ENCODE measurements at regions of chr10 and their contacts with region 1.

Region 1: GRCh38 chr10:101060036-101060950 is 1.5 kb upstream of the KAZALD1 start:
- DNase-seq: peak; percentile 94
- H3K27ac ChIP-seq: peak overlapping the region; percentile 94
- CTCF ChIP-seq: peak; percentile 91

Region 2: GRCh38 chr10:99659031-99659867 is 1401.0 kb before region 1 on chr10 and contains the start of gene ENTPD7:
- CTCF ChIA-PET with region 1: no interaction called
- POLR2A ChIA-PET with region 1: no interaction called
- DNase-seq: peak; percentile 99
- H3K27ac ChIP-seq: peak within 1 kb of the TSS; percentile 74
- CTCF ChIP-seq: no peak

Region 3: GRCh38 chr10:100890673-100891317 is 169.5 kb before region 1 on chr10:
- CTCF ChIA-PET with region 1: no interaction called
- POLR2A ChIA-PET with region 1: no interaction called
- DNase-seq: peak; percentile 96
- H3K27ac ChIP-seq: no peak overlapping the region; the same call in 1 of the 2 replicates
- CTCF ChIP-seq: no peak

Region 4: DNA sequence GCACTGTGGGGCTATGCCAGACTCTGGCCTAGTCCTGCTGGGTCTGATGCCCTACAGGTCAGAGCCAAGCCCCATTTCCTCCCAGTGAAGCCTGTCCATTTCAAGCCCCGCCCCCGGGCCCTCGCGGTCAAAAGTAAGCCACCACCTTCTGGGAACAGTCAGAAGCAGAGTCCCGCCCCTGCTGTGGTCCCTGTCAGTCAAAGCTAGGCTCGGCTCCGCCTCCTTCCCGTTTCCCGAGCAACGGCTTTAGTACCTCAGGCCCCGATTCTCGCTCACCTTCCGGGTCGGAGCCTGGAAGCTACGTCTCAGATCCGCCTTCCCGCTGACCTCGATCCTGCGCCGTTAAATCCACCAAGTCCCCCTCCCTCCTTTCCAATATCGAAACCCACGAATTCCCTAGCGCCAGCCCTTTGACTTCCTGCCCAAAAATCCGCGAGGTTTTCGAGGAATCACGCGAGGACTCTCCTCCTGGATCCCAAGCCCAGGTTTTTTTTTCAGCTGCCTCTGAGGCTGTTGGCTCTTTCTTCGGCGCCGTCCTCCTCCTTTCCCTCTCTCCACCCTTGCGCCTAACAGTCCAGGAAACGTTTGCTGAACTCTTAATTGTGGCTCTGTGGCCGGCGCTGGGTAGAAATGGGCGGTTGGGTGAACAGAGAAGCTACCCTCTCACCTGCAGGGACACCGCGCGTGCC is 17.5 kb before region 1 on chr10:
- CTCF ChIA-PET with region 1: interaction called, 7 read pairs
- POLR2A ChIA-PET with region 1: interaction called, 11 read pairs
- DNase-seq: peak; percentile 99
- H3K27ac ChIP-seq: peak overlapping the region; percentile 96
- CTCF ChIP-seq: no peak

Region 5: GRCh38 chr10:101535949-101536348 is 475.7 kb after region 1 on chr10:
- CTCF ChIA-PET with region 1: no interaction called
- POLR2A ChIA-PET with region 1: interaction called, 13 read pairs
- DNase-seq: no peak
- H3K27ac ChIP-seq: no peak overlapping the region
- CTCF ChIP-seq: no peak